Activated CD4-positive, alpha-beta T cell treated with anti-CD3 and anti-CD28 coated beads for 36 hours (primary cell): ENCODE measurements at regions of chr4 and their contacts with region 1.

Region 1: DNA sequence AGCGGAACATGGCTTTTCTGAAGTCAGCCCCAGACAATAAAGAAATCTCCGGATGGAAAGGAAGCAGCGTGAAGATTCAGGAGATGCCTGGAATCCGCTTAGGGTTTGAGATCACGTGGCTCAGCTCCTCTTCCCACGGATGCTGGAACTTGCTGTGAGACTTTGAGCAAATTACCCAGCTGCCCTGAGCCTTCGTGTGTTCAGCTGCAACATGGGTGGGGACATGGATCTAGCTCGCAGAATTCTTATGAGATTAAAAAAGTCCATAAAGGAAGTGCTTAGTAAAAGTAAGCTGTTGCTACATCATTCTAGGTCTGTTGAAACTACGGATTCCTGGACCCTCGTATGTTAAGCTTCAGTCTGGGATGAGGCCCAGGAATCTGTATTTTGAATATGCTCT is 55.7 kb upstream of the STIM2 start:
- DNase-seq: no peak
- ATAC-seq: no peak
- H3K4me3 Mint-ChIP-seq: no peak overlapping the region
- H3K27ac Mint-ChIP-seq: no peak overlapping the region
- H3K4me1 Mint-ChIP-seq: no peaks in the 10 kb centered on the region
- H3K27me3 Mint-ChIP-seq: no peaks in the 10 kb centered on the region

Region 2: DNA sequence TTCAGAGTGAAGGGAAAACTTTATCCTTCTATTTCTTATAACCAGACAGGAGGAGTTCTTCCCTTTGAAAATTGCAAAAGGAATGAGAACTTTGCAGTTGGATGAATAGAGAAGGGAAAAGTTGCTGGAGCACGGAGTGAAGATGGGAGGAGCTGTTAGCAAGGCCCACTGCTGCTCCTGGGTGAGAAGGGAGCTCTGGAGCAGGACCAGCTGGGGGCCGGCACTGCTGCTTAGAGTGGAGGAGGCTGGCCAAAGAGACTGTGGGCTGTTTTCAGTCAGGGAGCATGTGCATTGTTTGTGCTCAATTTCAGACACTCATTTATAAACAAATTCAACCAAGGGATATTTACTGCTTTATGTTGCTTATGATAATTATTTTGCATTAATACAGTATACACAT is 219.9 kb after region 1 on chr4:
- CTCF ChIA-PET with region 1: no interaction called
- POLR2A ChIA-PET with region 1: interaction called, 16 read pairs
- intact Hi-C with region 1: no loop called
- DNase-seq: no peak
- ATAC-seq: no peak
- H3K4me3 Mint-ChIP-seq: no peak overlapping the region
- H3K27ac Mint-ChIP-seq: peak overlapping the region; percentile 22
- H3K4me1 Mint-ChIP-seq: peaks cover 7% of the 10 kb centered on the region
- H3K27me3 Mint-ChIP-seq: no peaks in the 10 kb centered on the region